Activated CD4-positive, alpha-beta memory T cell treated with anti-CD3 and anti-CD28 coated beads, Interleukin-2, amount 10 ng/mL, durations not matched to agents 7 days and 5 days (primary cell): ENCODE measurements at regions of chr11 and their contacts with region 1.

Region 1: DNA sequence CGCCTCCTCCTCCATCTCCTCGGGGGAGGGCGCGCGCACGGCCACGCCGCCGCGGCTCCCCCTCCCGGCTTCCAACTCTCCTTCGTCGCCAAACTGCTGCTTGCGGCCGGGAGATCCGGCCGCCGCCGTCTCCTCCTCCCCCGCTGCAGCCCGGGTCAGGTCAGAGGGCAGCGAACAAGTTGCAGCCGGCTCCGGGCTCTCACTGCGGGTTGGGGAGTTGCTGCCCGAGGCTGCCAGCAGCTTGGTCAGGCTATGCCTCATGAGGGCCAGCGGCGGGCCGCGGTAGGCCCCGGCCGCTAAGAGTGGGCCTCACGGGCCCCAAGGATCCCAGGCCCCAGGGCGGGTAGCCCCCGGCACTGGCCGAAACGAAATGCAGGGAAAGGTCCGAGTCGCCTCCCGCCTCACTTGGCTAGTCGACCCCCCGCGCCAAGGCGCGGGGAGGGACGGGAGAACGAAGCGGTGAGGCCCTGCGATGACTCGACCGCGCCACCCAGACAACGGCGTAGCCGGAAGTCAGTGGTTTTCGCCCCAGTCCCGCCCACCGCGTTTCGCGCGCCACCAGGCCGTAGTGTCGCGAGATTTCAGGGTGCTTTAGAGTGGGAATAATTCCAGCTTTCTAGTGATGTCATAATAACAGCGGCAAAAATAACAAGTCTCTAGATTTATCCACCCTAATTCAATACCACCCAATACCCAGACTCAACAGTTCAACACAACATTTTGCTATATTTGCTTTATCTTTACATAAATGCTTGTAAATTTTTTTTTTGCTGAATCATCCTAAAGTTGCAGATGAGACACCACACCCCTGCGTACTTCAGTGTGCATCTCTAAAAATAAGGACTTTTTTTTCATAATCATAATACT is at the start of gene CREBZF:
- DNase-seq: peak; percentile 96
- H3K4me3 Mint-ChIP-seq: peak within 1 kb of the TSS; percentile 97
- H3K27ac Mint-ChIP-seq: peak within 1 kb of the TSS; percentile 94
- H3K4me1 Mint-ChIP-seq: peaks cover 28% of the 10 kb centered on the region
- H3K27me3 Mint-ChIP-seq: no peaks in the 10 kb centered on the region
- total RNA-seq, gene CREBZF: 66.0 to 68.4 TPM

Region 2: DNA sequence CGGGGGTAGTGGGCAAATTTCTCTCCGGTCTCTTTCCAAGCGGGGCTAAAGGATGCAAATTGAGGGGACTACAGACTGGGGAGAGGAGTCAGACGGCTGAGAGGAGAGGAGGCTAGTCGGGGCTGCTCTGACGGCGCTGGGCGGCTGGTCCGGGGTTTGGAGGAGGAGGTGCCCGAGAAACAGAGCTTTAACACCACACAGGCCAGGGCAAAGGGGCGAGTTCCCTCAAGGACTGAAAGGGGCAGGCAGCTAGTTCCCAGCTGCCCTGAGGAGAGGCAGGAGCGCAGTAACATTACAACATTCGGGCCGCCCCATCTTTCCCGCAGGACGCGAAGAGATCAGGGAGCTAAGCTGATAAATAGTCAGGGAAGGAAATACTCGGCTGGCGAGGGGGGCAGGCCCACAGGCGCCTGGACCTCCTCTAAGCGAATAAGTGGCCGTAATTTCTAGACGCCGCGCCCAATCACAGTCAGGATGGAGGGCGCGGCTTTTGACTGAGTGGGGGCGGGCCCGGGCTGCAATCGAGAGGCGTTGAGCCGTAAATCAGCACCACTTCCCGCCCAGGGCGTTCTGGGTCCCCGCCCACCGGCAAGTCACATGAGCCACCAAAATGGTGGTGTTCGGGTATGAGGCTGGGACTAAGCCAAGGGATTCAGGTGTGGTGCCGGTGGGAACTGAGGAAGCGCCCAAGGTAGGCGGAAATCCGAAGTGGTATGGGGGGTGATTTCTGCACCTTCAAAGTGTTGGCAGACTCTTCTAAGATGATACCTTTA is 36.7 kb before region 1 on chr11 and contains the start of gene TMEM126B:
- CTCF ChIA-PET with region 1: interaction called, 7 read pairs
- POLR2A ChIA-PET with region 1: interaction called, 45 read pairs
- DNase-seq: peak; percentile 97
- H3K4me3 Mint-ChIP-seq: peak within 1 kb of the TSS; percentile 94
- H3K27ac Mint-ChIP-seq: peak within 1 kb of the TSS; percentile 88
- H3K4me1 Mint-ChIP-seq: peaks cover 42% of the 10 kb centered on the region
- H3K27me3 Mint-ChIP-seq: peaks cover 2% of the 10 kb centered on the region
- total RNA-seq, gene TMEM126B: 48.8 to 50.3 TPM

Region 3: DNA sequence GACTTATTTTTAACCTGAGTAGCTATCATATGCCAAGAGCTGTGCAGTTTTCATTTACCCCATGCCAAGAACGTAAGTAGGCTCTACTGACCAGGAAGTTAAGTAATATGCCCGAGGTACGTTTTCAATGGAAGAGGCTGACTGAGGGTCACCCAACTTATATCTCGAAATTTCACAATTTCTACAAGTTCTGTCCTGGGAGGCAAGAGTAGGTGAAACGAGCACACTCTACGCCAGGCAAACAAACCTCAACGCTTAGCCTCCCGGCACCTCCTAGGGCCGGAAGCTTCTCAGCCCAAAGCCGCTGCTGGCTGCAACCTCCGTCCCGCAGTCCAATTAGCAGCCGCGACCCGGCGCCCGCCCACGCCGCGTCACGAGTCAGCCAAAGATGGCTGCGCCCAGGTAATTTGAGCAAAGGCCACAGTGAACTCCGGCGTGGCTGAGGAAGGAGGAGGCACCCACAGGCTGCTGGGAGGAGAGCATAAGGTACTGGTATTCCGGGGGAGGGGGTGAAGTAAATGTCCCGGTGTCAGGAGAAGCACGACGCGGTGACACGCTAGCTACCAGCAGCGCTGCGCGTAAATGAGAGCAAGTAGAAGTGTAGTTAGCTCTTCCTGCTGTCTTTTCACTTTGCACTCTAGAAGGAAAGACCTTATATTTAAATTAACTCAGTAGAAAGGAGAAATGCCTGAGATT is 17.1 kb before region 1 on chr11 and contains the start of gene TMEM126A:
- CTCF ChIA-PET with region 1: interaction called, 16 read pairs
- POLR2A ChIA-PET with region 1: interaction called, 220 read pairs
- DNase-seq: peak; percentile 93
- H3K4me3 Mint-ChIP-seq: peak within 1 kb of the TSS; percentile 92
- H3K27ac Mint-ChIP-seq: peak within 1 kb of the TSS; percentile 91
- H3K4me1 Mint-ChIP-seq: peaks cover 36% of the 10 kb centered on the region
- H3K27me3 Mint-ChIP-seq: peaks cover 16% of the 10 kb centered on the region
- total RNA-seq, gene TMEM126A: 31.8 to 35.6 TPM

Region 4: GRCh38 chr11:85682330-85683305 is 17.8 kb after region 1 on chr11:
- CTCF ChIA-PET with region 1: interaction called, 9 read pairs
- POLR2A ChIA-PET with region 1: interaction called, 54 read pairs
- DNase-seq: peak; percentile 64
- H3K4me3 Mint-ChIP-seq: peak overlapping the region; percentile 71
- H3K27ac Mint-ChIP-seq: peak overlapping the region; percentile 59
- H3K4me1 Mint-ChIP-seq: peaks cover 21% of the 10 kb centered on the region
- H3K27me3 Mint-ChIP-seq: peaks cover 12% of the 10 kb centered on the region

Region 5: DNA sequence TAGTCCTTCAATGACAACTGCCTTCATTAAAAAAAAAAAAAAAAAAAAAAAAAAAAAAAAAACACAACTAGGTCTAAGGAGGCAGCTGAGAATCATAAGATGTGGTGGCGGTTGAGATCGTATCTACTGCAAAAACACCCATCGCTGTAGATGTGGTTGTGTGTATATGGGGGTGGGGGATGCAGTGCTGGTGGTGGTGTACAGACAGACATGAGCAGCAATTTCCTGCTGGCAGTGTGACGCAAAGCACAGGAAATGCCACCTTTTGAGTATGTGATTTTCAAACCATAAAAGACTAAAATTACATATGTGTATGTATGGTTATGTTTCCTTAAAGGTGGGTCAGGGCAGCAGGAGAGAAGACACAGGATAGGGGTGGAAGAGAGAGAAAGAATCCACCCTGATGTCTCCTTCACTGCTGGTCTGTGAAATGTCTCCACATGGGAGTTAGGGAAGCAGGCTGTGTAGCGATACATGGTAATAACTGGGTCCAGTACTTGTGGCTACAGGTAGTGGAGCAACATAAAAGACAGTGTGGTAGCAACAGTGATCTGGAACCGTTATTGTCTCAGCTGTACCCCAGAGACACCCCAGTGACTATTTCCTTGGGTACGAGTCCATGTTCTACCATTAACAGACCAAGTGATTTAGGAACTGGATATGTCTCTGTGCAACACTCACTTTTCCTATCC is 88.2 kb after region 1 on chr11:
- CTCF ChIA-PET with region 1: interaction called, 3 read pairs
- POLR2A ChIA-PET with region 1: interaction called, 34 read pairs
- DNase-seq: peak; percentile 94
- H3K4me3 Mint-ChIP-seq: peak overlapping the region; percentile 58
- H3K27ac Mint-ChIP-seq: peak overlapping the region; percentile 94
- H3K4me1 Mint-ChIP-seq: peaks cover 96% of the 10 kb centered on the region
- H3K27me3 Mint-ChIP-seq: no peaks in the 10 kb centered on the region

Region 6: DNA sequence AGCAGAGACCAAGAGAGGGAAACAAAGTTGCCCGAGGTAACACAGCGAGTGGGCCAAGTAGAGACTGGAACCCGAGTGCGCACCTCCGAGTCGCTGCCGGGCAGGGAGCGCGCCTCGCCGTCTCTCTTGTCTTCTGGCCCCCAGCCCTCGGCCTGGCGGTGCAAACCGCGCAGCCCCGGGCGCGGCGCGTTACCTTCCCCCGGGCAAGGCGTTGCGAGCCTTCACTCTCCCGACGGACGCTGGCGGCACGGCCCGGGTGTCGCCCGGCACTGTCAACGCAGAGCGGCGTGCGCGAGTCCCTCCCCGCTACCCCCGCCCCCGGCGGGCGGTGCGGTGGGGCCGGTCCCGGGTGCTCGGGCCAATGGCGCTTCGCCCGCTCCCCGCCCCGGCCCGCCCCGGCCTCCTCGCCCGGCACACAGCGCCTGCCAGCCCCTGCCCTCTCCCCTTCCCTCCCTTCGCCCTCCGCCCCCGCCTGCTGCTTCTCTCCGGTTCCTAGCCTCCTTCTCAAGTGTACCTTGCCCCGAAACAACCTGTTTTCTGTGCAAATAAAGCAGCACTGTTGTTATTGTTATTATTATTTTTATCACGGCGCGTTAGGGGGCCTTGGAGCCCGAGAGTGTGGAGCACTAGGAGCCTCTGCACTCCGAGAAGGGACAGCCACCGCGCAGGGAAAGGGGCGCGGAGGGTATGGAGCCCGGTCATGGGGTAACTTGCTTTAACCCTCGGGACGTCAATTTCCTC is 146.2 kb after region 1 on chr11 and contains the start of gene SYTL2:
- CTCF ChIA-PET with region 1: no interaction called
- POLR2A ChIA-PET with region 1: interaction called, 14 read pairs
- DNase-seq: peak; percentile 83
- H3K4me3 Mint-ChIP-seq: peak within 1 kb of the TSS; percentile 86
- H3K27ac Mint-ChIP-seq: peak within 1 kb of the TSS; percentile 47
- H3K4me1 Mint-ChIP-seq: peaks cover 46% of the 10 kb centered on the region
- H3K27me3 Mint-ChIP-seq: peaks cover 7% of the 10 kb centered on the region
- total RNA-seq, gene SYTL2: 93.0 to 99.2 TPM

Region 7: GRCh38 chr11:85826116-85826855 is 161.4 kb after region 1 on chr11:
- CTCF ChIA-PET with region 1: interaction called, 8 read pairs
- POLR2A ChIA-PET with region 1: interaction called, 32 read pairs
- DNase-seq: peak; percentile 31
- H3K4me3 Mint-ChIP-seq: no peak overlapping the region
- H3K27ac Mint-ChIP-seq: peak overlapping the region; percentile 41
- H3K4me1 Mint-ChIP-seq: peaks cover 72% of the 10 kb centered on the region
- H3K27me3 Mint-ChIP-seq: no peaks in the 10 kb centered on the region

Region 8: DNA sequence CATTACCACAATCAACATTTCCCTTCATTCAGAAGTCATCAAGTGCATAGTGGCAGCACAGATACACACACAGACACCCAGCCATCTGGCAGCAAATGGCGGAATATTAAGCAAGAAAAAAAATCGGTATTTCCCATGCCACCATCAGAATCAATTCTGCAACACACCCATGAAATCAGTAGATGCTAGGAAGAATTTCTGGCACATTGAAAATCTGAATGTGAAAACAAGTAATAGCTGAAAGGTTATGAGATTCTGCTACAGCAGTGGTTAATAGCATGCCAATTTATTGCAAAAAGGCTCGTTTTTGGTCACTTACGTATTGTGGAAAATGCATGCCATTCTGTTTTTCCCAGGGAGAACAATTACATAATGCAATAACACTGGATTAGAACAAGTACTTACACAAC is 312.9 kb after region 1 on chr11:
- CTCF ChIA-PET with region 1: no interaction called
- POLR2A ChIA-PET with region 1: no interaction called
- DNase-seq: no peak
- H3K4me3 Mint-ChIP-seq: no peak overlapping the region
- H3K27ac Mint-ChIP-seq: peak overlapping the region; percentile 53
- H3K4me1 Mint-ChIP-seq: peaks cover 19% of the 10 kb centered on the region
- H3K27me3 Mint-ChIP-seq: no peaks in the 10 kb centered on the region